ENCODE measurements at regions of chr22 and their contacts with region 1.

Region 1: GRCh38 chr22:46684706-46685105 is 53.3 kb downstream of the CERK start:
- DNase-seq: peak; percentile 51
- ATAC-seq: peak; percentile 92
- H3K4me3 Mint-ChIP-seq: peak overlapping the region; percentile 61
- H3K27ac Mint-ChIP-seq: peak overlapping the region; percentile 65
- H3K4me1 Mint-ChIP-seq: peaks cover 35% of the 10 kb centered on the region
- H3K27me3 Mint-ChIP-seq: no peaks in the 10 kb centered on the region
- CTCF ChIP-seq: no peak

Region 2: DNA sequence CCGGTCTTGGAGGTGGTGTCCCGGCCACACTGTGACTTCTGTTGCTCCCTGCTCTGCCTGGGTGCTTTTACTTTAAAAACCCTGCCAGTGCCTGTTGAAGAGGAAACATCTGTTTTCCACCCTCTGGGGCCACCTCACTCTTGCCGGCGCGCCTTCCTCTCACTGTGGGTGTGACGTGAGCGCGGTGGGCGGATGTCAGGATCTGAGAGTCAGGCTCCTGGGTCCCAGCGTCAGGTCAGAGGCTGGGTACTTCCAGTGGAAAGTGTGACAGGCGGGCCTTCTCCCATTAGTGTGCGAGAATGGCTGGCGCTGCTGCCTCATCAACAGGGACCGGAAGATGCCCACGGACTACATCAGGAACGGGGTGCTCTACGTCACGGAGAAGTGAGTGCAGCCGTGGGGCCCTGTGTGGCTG is 10.3 kb before region 1 on chr22:
- CTCF ChIA-PET with region 1: no interaction called
- POLR2A ChIA-PET with region 1: interaction called, 5 read pairs
- intact Hi-C with region 1: loop called (anchors 1 kb)
- DNase-seq: peak; percentile 73
- ATAC-seq: peak; percentile 81
- H3K4me3 Mint-ChIP-seq: peak overlapping the region; percentile 76
- H3K27ac Mint-ChIP-seq: peak overlapping the region; percentile 77
- H3K4me1 Mint-ChIP-seq: peaks cover 34% of the 10 kb centered on the region
- H3K27me3 Mint-ChIP-seq: no peaks in the 10 kb centered on the region
- CTCF ChIP-seq: no peak

Region 3: DNA sequence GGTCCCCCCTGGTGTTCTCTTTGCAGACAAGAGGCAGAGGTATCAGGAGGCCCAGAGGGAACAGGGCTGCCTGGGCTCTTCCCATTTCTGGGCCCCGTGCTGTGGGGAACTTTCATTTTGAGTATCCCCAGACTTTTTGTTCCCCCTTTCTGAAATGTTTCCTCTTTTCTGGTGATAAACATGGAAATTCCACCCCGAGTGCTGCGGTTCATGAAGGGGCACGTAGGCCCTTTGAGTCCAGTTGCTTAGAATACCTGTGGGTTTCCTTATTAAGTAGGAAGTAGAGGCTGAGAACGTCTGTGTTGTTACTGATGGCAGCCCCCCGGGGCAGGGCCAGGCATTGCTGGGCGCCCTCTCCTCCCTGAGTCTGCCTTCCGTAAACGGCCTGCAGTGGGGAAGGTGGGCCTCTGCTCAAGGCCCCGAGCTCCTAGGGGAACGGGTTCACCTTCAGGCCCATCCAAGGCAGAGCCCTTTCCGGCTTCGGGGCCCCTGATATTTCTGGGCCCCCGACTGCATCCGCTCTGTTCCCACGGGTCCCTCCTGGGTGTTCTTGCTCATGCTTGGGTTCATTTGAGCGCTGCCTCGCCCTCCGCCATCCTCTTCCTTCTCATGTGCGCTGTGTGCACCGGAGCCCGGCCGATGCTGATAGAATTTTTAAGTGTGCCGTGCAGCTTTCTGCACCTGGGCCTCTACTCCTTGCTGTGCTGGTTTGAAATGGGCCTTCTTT is 89.7 kb after region 1 on chr22:
- CTCF ChIA-PET with region 1: no interaction called
- POLR2A ChIA-PET with region 1: no interaction called
- intact Hi-C with region 1: loop called (anchors 1 kb)
- DNase-seq: peak; percentile 66
- ATAC-seq: peak; percentile 64
- H3K4me3 Mint-ChIP-seq: peak overlapping the region; percentile 72
- H3K27ac Mint-ChIP-seq: peak overlapping the region; percentile 89
- H3K4me1 Mint-ChIP-seq: peaks cover 93% of the 10 kb centered on the region
- H3K27me3 Mint-ChIP-seq: no peaks in the 10 kb centered on the region
- CTCF ChIP-seq: no peak

Region 4: DNA sequence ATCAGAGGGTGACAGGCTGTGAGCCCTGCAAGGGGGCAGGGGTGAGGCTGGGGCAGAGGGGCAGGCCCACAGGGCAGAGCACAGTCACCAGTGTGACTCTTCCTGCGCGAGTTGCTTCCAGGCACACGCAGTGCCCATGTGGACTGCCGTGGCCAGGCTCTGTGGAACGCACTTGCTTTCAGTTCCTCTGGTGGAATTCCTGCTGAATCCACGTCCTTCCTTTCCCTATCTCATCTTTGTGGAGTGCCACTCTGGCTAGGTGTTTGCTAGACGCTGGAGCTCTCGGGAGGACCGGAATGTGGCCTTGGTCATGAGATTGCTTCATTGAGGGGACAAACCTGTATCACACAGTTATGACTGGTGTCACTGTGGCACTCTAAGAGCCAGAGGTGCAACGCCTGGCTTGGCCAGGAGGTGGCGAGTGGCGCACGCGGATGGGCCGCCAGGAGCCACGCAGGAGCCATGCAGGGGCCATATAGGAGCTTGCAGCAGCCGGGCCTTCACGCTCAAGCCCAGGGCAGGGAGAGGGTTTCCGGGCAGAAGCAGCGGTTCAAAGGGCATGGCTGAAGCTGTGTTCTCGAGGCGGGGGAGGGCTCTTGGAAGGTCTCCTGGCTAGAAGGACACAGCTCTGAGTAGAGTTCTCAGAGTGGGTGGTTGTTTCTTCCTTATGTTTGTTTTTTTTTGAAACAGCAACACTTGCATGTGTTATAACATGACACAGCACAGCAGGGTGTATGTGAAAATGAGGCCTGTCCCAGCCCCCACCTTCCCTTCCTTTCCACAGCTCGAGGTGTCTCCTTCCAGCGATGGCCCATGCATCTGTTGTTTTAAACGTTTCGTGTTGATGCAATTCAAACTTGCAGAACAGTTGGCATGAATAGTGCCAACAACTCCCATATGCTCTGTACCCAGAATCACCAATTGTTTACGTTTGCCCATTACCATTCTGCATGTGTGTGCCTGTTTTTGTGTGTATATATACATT is 114.0 kb after region 1 on chr22:
- CTCF ChIA-PET with region 1: no interaction called
- POLR2A ChIA-PET with region 1: no interaction called
- intact Hi-C with region 1: loop called (anchors 2 kb)
- DNase-seq: peak; percentile 69
- ATAC-seq: peak; percentile 90
- H3K4me3 Mint-ChIP-seq: no peak overlapping the region
- H3K27ac Mint-ChIP-seq: peak overlapping the region; percentile 18
- H3K4me1 Mint-ChIP-seq: peaks cover 36% of the 10 kb centered on the region
- H3K27me3 Mint-ChIP-seq: no peaks in the 10 kb centered on the region
- CTCF ChIP-seq: peak; percentile 28